ENCODE measurements at regions of chr21 and their contacts with region 1.

Region 1: GRCh38 chr21:14737922-14738321 is 191.8 kb upstream of the SAMSN1 start:
- DNase-seq: peak; percentile 58
- ATAC-seq: peak; percentile 77
- H3K4me3 Mint-ChIP-seq: no peak overlapping the region
- H3K27ac Mint-ChIP-seq: no peak overlapping the region
- H3K4me1 Mint-ChIP-seq: peaks cover 33% of the 10 kb centered on the region
- H3K27me3 Mint-ChIP-seq: no peaks in the 10 kb centered on the region
- CTCF ChIP-seq: peak; percentile 82

Region 2: GRCh38 chr21:14403681-14404318 is 334.1 kb before region 1 on chr21:
- CTCF ChIA-PET with region 1: interaction called, 12 read pairs
- POLR2A ChIA-PET with region 1: no interaction called
- intact Hi-C with region 1: loop called (anchors 5 kb)
- DNase-seq: no peak
- ATAC-seq: peak; percentile 61
- H3K4me3 Mint-ChIP-seq: no peak overlapping the region
- H3K27ac Mint-ChIP-seq: no peak overlapping the region
- H3K4me1 Mint-ChIP-seq: no peaks in the 10 kb centered on the region
- H3K27me3 Mint-ChIP-seq: no peaks in the 10 kb centered on the region
- CTCF ChIP-seq: peak; percentile 85

Region 3: GRCh38 chr21:14533504-14534428 is 204.2 kb before region 1 on chr21:
- CTCF ChIA-PET with region 1: interaction called, 7 read pairs
- POLR2A ChIA-PET with region 1: no interaction called
- intact Hi-C with region 1: loop called (anchors 5 kb)
- DNase-seq: no peak
- ATAC-seq: peak; percentile 79
- H3K4me3 Mint-ChIP-seq: peak overlapping the region; percentile 72
- H3K27ac Mint-ChIP-seq: peak overlapping the region; percentile 99
- H3K4me1 Mint-ChIP-seq: peaks cover 78% of the 10 kb centered on the region
- H3K27me3 Mint-ChIP-seq: no peaks in the 10 kb centered on the region
- CTCF ChIP-seq: no peak

Region 4: DNA sequence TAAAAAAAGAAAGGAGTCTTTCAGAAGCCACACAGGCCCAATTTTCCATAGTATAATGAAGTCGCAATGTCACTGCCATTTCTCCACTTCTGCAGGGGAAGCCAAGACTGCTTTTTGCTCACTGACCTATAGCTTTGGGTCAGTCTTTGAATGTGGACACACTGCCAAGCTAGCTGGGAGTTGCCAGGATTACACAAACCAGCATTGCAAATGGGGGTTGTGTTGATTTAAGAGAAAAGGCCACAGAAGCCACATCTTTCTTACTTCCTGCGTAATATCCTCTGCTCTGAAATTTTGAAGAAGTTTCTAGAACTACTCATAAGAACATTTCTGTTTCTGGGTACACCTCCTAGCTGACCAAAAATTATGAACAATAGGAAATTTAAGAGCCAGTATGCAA is 146.0 kb before region 1 on chr21:
- CTCF ChIA-PET with region 1: interaction called, 10 read pairs
- POLR2A ChIA-PET with region 1: no interaction called
- intact Hi-C with region 1: no loop called
- DNase-seq: peak; percentile 27
- ATAC-seq: peak; percentile 49
- H3K4me3 Mint-ChIP-seq: no peak overlapping the region
- H3K27ac Mint-ChIP-seq: peak overlapping the region; percentile 64
- H3K4me1 Mint-ChIP-seq: peaks cover 30% of the 10 kb centered on the region
- H3K27me3 Mint-ChIP-seq: no peaks in the 10 kb centered on the region
- CTCF ChIP-seq: no peak

Region 5: DNA sequence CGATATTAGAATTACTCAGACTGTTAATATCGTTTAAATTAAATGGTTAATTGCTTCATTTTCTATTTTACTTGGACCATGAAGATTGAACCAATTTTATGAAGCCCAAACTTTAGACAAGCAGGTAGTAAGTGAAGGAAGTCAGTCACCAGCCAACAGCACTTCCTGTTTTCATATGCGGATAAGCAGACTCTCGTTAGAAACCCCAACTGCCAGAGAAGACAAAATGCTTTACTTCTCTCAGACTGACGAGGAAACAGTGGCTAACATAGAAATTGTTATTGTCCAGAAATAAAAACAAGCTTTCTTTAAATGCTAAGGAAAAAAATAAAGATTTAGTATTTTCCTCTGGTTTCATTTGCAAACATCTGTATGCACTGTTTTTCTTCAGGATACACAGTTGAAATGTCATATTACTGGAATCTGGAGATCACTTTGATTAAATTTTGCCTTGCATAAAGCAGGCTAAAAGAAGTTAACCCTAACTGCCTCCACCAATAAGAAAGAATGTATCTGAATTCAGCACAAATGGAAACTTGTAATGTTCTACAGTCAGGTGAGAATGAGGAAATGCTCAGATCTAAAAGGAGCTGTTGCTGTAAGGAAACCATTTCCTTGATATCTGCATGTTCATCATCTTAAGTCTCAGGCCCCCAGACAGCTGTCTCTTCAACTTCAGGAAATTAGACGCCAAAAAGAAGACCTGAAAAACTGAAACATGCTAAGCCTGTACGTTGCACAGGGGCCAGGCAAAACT is 62.0 kb before region 1 on chr21:
- CTCF ChIA-PET with region 1: interaction called, 11 read pairs
- POLR2A ChIA-PET with region 1: no interaction called
- intact Hi-C with region 1: no loop called
- DNase-seq: peak; percentile 27
- ATAC-seq: peak; percentile 82
- H3K4me3 Mint-ChIP-seq: peak overlapping the region; percentile 59
- H3K27ac Mint-ChIP-seq: peak overlapping the region; percentile 97
- H3K4me1 Mint-ChIP-seq: peaks cover 41% of the 10 kb centered on the region
- H3K27me3 Mint-ChIP-seq: no peaks in the 10 kb centered on the region
- CTCF ChIP-seq: no peak